Activated CD8-positive, alpha-beta T cell treated with anti-CD3 and anti-CD28 coated beads, Interleukin-2, amount 10 ng/mL, durations not matched to agents 7 days and 5 days (primary cell): ENCODE measurements at regions of chr19 and their contacts with region 1.

Region 1: GRCh38 chr19:38634757-38635482 is 12.5 kb upstream of the ACTN4 start:
- DNase-seq: peak; percentile 81
- ATAC-seq: peak; percentile 21
- H3K4me3 Mint-ChIP-seq: no peak overlapping the region
- H3K27ac Mint-ChIP-seq: peak overlapping the region; percentile 83
- H3K4me1 Mint-ChIP-seq: peaks cover 36% of the 10 kb centered on the region
- H3K27me3 Mint-ChIP-seq: no peaks in the 10 kb centered on the region

Region 2: DNA sequence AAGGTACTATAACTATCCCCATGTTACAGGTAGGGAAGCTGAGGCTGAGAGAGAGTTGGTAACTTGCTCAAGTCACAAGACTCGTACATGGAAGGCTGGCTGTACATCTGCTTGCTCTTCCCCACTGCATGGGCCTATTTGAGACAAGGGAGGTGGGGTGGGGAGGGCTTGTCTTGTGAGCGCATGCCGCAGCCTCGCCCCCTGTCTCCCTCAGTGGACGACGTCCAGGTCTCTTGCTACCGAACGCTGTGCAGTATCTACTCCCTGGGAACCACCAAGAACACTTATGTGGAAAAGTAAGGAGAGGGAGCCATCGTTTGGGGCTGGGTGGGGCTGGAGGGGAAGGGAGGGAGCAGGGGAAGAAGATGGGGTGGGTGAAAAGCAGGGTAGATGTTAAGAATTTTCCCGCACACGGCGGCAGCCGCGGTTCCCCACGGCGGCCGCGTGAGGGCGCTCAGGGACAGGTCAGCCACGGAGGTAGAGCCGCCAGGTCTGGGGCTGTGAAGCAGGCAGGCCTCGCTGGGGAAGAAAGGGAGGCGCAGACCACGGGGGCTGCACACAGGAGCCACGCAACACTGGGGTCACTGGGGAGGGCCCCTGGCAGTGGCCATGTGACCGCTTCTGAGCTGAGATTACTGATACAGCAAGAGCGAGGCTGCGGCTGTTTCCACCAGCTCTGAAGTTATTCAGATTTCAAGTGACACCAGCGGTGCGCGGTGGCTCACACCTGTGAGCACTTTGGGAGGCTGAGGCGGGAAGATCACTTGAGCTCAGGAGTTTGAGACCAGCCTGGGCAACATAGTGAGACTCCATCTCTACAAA is 119.9 kb before region 1 on chr19:
- CTCF ChIA-PET with region 1: interaction called, 72 read pairs
- POLR2A ChIA-PET with region 1: interaction called, 3 read pairs
- DNase-seq: peak; percentile 81
- ATAC-seq: peak; percentile 81
- H3K4me3 Mint-ChIP-seq: peak overlapping the region; percentile 8
- H3K27ac Mint-ChIP-seq: peak overlapping the region; percentile 49
- H3K4me1 Mint-ChIP-seq: peaks cover 30% of the 10 kb centered on the region
- H3K27me3 Mint-ChIP-seq: peaks cover 22% of the 10 kb centered on the region

Region 3: DNA sequence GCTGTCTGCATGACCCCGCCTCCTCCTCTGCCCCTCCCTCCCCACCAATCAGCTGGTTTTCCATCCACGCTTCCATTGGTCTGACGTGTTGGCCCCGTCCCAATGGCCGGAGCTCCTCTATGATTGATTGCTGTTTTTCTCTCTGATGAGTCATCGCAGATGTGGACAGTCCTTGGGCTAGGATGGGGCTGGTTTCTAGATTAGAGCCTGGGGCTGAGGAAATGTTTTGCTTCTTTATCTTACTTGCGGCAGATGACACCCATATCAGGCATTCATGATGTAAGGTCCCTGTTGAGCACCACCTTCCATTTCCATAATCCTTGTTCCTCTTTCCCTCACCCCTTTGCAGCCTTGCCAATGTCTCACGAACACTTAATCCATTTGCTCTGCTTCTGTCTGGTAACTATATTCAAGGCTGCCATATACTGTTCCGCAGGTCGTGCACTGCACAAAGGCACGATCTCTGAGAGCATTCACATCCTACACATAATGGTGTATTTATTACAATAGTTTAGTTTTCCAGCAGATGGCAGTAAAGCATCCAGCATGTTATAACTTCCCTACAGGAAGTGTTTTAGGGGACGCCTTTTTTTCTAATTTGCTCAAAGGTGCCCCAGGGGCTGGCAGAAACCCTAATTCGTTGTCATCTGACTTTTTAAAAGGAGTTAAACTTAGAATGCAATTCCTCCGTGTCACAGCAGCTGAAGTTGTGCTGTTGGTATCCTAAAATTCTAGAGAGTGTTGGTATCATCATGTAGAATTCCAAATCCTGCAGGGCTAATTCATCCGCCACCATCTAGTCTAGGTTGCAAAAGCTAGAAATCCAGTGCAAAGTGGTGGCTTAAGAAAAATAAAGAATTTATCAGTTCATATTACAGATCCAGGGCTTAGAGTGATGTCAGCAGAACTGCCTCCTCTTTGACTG is 90.6 kb before region 1 on chr19:
- CTCF ChIA-PET with region 1: interaction called, 35 read pairs
- POLR2A ChIA-PET with region 1: no interaction called
- DNase-seq: peak; percentile 55
- ATAC-seq: peak; percentile 92
- H3K4me3 Mint-ChIP-seq: no peak overlapping the region
- H3K27ac Mint-ChIP-seq: peak overlapping the region; percentile 51
- H3K4me1 Mint-ChIP-seq: peaks cover 26% of the 10 kb centered on the region
- H3K27me3 Mint-ChIP-seq: peaks cover 3% of the 10 kb centered on the region

Region 4: DNA sequence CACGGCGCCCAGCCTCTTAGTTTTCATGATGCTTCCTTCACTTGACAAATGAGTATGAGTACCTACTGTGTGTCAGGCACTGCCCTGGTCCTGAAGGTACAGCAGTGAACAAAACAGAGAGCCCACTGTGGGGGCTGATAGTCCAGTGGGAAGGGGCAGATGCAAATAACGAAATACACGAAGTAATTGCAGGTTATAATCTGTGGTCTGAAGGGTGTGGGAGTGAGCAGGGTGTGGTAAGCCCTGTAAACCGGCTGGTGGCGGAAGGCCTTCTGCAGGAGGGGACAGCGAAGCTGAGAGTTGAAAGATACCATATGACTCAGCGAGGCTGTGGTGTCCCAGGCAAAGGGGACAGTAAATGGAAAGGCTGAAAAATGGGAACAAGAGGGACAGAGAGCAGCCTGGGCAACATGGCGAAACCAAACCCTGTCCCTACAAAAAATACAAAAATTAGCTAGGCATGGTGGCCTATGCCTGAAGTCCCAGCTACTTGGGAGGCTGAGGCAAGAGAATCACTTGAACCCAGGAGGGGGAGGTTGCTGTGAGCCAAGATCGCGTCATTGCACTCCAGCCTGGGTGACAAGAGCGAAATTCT is 77.6 kb before region 1 on chr19:
- CTCF ChIA-PET with region 1: interaction called, 14 read pairs
- POLR2A ChIA-PET with region 1: no interaction called
- DNase-seq: peak; percentile 58
- ATAC-seq: peak; percentile 71
- H3K4me3 Mint-ChIP-seq: peak overlapping the region; percentile 35
- H3K27ac Mint-ChIP-seq: peak overlapping the region; percentile 59
- H3K4me1 Mint-ChIP-seq: peaks cover 48% of the 10 kb centered on the region
- H3K27me3 Mint-ChIP-seq: peaks cover 16% of the 10 kb centered on the region

Region 5: DNA sequence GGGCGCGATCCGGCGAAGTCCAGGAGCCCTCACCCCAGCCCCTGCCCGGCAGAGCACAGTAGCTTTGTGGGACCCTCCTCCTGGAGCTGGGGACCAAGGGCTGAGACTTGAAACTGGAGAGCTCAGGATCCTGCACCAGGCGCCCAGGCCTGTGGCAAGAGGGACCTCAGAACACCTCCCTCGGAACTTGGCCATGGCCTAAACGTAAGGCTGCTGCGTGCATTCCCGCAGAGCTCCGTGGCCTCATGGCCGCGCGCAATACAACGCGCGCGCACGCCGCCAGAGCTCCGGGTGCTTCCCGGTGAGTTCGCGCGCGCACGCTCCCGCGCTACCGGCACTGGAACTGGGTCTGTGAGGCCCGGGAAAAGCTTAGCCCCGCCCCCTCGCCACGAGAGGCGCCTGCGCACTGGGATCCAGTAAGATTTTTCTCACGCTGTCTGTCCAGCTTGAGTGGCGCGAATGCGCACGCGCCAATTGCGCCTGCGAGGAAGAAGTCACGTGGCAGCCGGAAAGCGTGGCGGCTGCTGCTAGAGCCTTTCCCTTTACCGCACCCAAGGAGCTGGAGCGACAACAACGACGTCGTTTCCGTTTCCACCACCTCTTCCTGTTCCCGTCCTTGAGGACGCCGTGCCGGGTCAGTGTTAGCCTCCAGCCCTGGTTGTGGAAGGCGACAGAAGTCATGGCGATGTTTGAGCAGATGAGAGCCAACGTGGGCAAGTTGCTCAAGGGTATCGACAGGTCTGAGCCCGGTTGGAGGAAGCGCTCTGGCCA is 16.1 kb before region 1 on chr19 and contains the start of gene EIF3K:
- CTCF ChIA-PET with region 1: interaction called, 65 read pairs
- POLR2A ChIA-PET with region 1: interaction called, 4 read pairs
- DNase-seq: peak; percentile 98
- ATAC-seq: peak; percentile 58
- H3K4me3 Mint-ChIP-seq: peak within 1 kb of the TSS; percentile 100
- H3K27ac Mint-ChIP-seq: peak within 1 kb of the TSS; percentile 99
- H3K4me1 Mint-ChIP-seq: peaks cover 53% of the 10 kb centered on the region
- H3K27me3 Mint-ChIP-seq: no peaks in the 10 kb centered on the region
- total RNA-seq, gene EIF3K: 325 to 352 TPM

Region 6: DNA sequence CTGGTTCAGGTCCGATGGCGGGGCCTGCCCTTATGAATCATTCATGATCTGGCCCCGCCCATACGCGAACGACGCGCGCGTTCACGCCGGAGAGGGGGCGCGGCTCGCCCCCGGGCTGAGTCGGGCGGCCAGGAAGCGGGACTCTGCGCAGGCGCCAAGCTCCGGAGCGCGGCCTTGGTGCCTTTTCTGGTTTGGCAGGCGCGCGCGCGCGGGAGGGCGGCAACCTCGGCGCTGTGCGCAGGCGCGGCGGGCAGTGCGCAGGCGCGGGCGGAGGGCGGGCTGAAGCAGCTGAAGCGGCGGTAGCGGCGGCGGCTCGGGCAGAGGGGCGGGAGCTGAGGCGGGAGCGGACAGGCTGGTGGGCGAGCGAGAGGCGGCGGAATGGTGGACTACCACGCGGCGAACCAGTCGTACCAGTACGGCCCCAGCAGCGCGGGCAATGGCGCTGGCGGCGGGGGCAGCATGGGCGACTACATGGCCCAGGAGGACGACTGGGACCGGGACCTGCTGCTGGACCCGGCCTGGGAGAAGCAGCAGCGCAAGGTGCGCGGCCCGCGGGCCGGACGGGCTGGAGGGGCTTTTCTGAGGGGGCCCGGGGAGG is 12.5 kb after region 1 on chr19 and contains the start of gene ACTN4:
- CTCF ChIA-PET with region 1: interaction called, 17 read pairs
- POLR2A ChIA-PET with region 1: no interaction called
- DNase-seq: peak; percentile 100
- ATAC-seq: peak; percentile 92
- H3K4me3 Mint-ChIP-seq: peak within 1 kb of the TSS; percentile 95
- H3K27ac Mint-ChIP-seq: peak within 1 kb of the TSS; percentile 88
- H3K4me1 Mint-ChIP-seq: peaks cover 50% of the 10 kb centered on the region
- H3K27me3 Mint-ChIP-seq: no peaks in the 10 kb centered on the region
- total RNA-seq, gene ACTN4: 357 to 373 TPM